ENCODE measurements at regions of chr4 and their contacts with region 1.

Region 1: DNA sequence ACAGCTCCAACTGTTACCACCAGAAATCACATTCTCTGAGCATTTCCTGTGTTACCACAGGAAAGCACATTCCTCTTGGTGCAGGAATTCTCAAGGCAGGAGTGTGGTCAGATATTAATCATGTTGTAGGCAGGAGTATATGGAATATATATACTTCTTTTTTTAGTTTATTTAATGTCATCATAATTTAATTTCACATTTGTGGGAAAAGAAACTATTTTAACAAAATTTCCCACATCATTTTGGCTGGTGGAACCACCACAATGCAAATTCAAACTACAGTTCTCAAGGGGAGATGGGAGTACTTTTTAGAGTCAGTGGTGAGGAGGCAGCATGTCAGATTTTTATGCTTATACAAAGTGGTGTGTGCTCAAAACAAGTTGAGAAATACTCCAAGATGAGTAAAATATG is 139.0 kb downstream of the ATP10D start:
- DNase-seq: no peak
- H3K4me3 ChIP-seq: no peak overlapping the region
- H3K27me3 ChIP-seq: no peaks in the 10 kb centered on the region
- CTCF ChIP-seq: no peak

Region 2: DNA sequence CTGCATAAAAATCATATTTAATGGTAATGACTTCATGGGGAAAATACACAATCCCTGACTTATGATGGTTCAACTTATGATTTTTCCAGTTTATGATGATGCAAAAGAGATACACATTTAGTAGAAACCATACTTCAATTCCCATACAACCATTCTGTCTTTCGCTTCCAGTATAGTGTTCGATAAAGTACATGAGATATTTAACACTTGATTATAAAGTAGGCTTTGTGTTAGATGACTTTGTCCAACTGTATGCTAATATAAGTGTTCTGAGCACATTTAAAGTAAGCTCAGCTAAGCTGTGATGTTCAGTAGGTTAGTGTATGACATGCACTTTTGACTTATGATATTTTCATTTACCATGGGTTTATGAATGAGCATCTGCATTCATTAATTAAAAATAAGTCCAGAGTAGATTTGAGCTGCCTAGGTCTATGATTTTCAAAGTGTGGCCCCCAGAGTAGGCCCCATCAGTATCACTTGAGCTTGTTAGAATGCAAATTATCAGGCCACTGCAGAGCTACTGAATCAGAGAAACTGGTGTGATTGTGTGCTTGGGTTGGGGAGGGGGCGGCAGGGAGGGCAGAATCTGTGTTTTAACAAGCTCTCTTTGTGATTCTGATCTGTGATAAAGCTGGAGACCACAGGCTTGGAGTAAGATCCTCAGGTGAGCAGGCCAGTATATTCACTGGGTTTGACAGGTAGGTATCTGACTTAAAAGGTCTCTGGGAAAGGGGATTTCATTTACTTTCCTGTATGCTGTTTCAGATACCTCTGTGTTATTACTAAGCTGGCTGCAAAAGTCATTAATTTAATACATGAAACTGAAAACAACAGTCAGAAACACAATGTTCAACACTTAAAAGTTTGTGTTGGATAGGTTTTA is 130.6 kb before region 1 on chr4:
- CTCF ChIA-PET with region 1: no interaction called
- POLR2A ChIA-PET with region 1: interaction called, 11 read pairs
- DNase-seq: no peak
- H3K4me3 ChIP-seq: no peak overlapping the region
- H3K27me3 ChIP-seq: no peaks in the 10 kb centered on the region
- CTCF ChIP-seq: no peak

Region 3: GRCh38 chr4:48093949-48094550 is 470.0 kb after region 1 on chr4:
- CTCF ChIA-PET with region 1: no interaction called
- POLR2A ChIA-PET with region 1: no interaction called
- DNase-seq: no peak
- H3K4me3 ChIP-seq: no peak overlapping the region
- H3K27me3 ChIP-seq: no peaks in the 10 kb centered on the region
- CTCF ChIP-seq: no peak

Measured in BJ (cell line).